CD8-positive, alpha-beta T cell (primary cell): ENCODE measurements at regions of chr4 and their contacts with region 1.

Region 1: DNA sequence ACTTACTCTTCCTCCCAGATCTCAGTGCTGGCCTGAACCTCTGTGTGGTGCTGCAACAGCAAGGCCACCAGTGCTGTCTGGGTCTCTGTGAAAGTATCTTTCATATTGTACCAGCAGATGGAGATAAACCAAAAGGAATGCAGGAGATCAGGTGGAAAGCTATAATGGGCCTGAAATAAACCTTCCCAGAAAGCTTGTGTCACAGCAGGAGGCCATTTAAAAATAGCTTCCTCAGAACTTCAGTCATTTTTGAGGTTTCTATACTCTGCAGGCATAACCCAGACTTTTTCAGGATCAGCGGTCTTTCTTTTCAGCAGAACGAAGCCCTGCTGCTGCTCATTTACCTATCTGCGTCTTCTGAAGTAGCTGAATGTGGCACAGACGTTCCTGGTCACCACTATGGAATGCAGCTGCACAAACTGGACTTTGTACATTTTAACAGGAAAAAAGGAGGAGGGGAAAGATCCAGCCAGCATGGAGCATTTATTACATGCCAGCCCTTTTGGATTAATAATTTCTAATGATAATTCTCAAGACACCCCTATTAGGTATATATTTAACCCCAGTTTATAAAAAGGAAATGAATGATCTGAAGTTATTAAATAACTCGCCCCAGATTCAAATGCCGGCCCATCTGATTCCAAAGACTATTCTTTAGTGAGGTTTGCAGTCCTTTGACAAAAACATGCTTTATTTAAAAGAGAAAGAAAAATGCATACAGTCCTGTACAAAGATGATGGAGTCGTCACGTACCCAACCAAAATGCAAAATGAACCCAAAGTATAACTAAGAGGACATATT is 119.7 kb downstream of the NFKB1 start:
- DNase-seq: peak in 1 of 9 experiments; percentile 56
- ATAC-seq: peak; percentile 50
- H3K4me3 ChIP-seq: no peak overlapping the region
- H3K4me3 Mint-ChIP-seq: no peak overlapping the region
- H3K27ac ChIP-seq: no peak overlapping the region
- H3K27ac Mint-ChIP-seq: peak overlapping the region; percentile 53
- H3K4me1 ChIP-seq: peaks cover 28% of the 10 kb centered on the region
- H3K4me1 Mint-ChIP-seq: peaks cover 46% of the 10 kb centered on the region
- H3K27me3 ChIP-seq: no peaks in the 10 kb centered on the region
- H3K27me3 Mint-ChIP-seq: no peaks in the 10 kb centered on the region
- CTCF ChIP-seq: peak; percentile 26

Region 2: GRCh38 chr4:102430461-102430910 is 190.4 kb before region 1 on chr4:
- CTCF ChIA-PET with region 1: interaction called, 19 read pairs
- POLR2A ChIA-PET with region 1: no interaction called
- intact Hi-C with region 1: loop called (anchors 1 to 5 kb)
- DNase-seq: peak in 1 of 9 experiments; percentile 19
- ATAC-seq: no peak
- H3K4me3 ChIP-seq: peak overlapping the region; percentile 57 to 58
- H3K4me3 Mint-ChIP-seq: peak overlapping the region; percentile 88
- H3K27ac ChIP-seq: peak overlapping the region; percentile 34 to 55
- H3K27ac Mint-ChIP-seq: no peak overlapping the region
- H3K4me1 ChIP-seq: peaks cover 4% of the 10 kb centered on the region
- H3K4me1 Mint-ChIP-seq: peaks cover 8% of the 10 kb centered on the region
- H3K27me3 ChIP-seq: no peaks in the 10 kb centered on the region
- H3K27me3 Mint-ChIP-seq: no peaks in the 10 kb centered on the region
- CTCF ChIP-seq: no peak

Region 3: GRCh38 chr4:102578819-102579218 is 42.1 kb before region 1 on chr4:
- CTCF ChIA-PET with region 1: interaction called, 7 read pairs
- POLR2A ChIA-PET with region 1: no interaction called
- intact Hi-C with region 1: loop called in 1 of 2 experiments (anchors 1 kb)
- DNase-seq: peak in 2 of 9 experiments; percentile 44 to 53
- ATAC-seq: peak; percentile 22
- H3K4me3 ChIP-seq: no peak overlapping the region
- H3K4me3 Mint-ChIP-seq: no peak overlapping the region
- H3K27ac ChIP-seq: no peak overlapping the region
- H3K27ac Mint-ChIP-seq: no peak overlapping the region
- H3K4me1 ChIP-seq: peaks cover 40% of the 10 kb centered on the region
- H3K4me1 Mint-ChIP-seq: peaks cover 67% of the 10 kb centered on the region
- H3K27me3 ChIP-seq: no peaks in the 10 kb centered on the region
- H3K27me3 Mint-ChIP-seq: no peaks in the 10 kb centered on the region
- CTCF ChIP-seq: no peak

Region 4: DNA sequence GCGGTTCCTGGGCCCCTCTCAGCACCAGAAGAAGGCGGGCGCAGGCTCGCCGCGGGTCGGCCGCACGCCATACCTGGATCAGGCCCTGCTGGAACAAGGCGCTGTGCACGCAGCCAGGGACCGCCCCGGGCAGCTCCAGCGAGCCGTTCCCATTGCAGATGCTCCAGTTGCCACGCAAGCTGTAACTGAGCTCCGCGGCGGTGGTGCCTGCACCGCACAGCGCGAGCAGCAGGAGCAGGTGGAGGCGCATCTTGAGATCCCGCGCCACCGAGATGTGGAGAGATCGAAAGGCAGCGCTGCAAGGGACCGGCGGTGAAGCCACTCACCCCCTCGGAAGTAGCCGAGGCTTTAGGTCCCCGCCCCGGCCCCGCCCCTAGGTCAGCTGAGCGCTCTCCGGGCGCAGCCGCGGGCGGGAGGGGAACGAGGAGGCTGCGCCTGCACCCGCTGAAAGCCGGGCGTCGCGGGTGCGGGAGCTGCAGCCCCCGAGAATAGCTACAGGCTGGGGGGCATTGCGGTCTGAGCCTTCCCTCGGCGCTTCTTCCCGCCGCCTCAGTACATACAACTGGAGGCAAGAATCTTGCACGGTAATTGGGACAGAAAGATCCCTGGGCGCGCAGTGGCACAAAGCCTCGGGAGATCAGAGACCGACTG is 139.9 kb after region 1 on chr4 and contains the start of gene MANBA:
- CTCF ChIA-PET with region 1: interaction called, 4 read pairs
- POLR2A ChIA-PET with region 1: interaction called, 4 read pairs
- intact Hi-C with region 1: loop called in 1 of 2 experiments (anchors 5 kb)
- DNase-seq: peak; percentile 67 to 90 (median 84)
- ATAC-seq: peak; percentile 83
- H3K4me3 ChIP-seq: peak within 1 kb of the TSS; percentile 88 to 93
- H3K4me3 Mint-ChIP-seq: peak within 1 kb of the TSS; percentile 96
- H3K27ac ChIP-seq: peak within 1 kb of the TSS; percentile 62 to 65
- H3K27ac Mint-ChIP-seq: peak within 1 kb of the TSS; percentile 94
- H3K4me1 ChIP-seq: peaks cover 10% of the 10 kb centered on the region
- H3K4me1 Mint-ChIP-seq: peaks cover 42% of the 10 kb centered on the region
- H3K27me3 ChIP-seq: no peaks in the 10 kb centered on the region
- H3K27me3 Mint-ChIP-seq: no peaks in the 10 kb centered on the region
- CTCF ChIP-seq: no peak
- total RNA-seq, gene MANBA: 22.5 to 24.1 TPM

Region 5: GRCh38 chr4:103091601-103092223 is 470.8 kb after region 1 on chr4:
- CTCF ChIA-PET with region 1: interaction called, 4 read pairs
- POLR2A ChIA-PET with region 1: no interaction called
- intact Hi-C with region 1: loop called (anchors 2 to 5 kb)
- DNase-seq: peak in 6 of 9 experiments; percentile 9 to 80 (median 47)
- ATAC-seq: peak; percentile 78
- H3K4me3 ChIP-seq: no peak overlapping the region
- H3K4me3 Mint-ChIP-seq: no peak overlapping the region
- H3K27ac ChIP-seq: no peak overlapping the region
- H3K27ac Mint-ChIP-seq: no peak overlapping the region
- H3K4me1 ChIP-seq: no peaks in the 10 kb centered on the region
- H3K4me1 Mint-ChIP-seq: peaks cover 18% of the 10 kb centered on the region
- H3K27me3 ChIP-seq: no peaks in the 10 kb centered on the region
- H3K27me3 Mint-ChIP-seq: no peaks in the 10 kb centered on the region
- CTCF ChIP-seq: peak; percentile 71